ENCODE measurements at regions of chr2 and their contacts with region 1.

Region 1: GRCh38 chr2:59449269-59449668 is 1104.2 kb downstream of the BCL11A start:
- DNase-seq: no peak
- H3K4me3 ChIP-seq: no peak overlapping the region
- H3K27ac ChIP-seq: no peak overlapping the region
- H3K4me1 ChIP-seq: no peaks in the 10 kb centered on the region
- H3K27me3 ChIP-seq: no peaks in the 10 kb centered on the region
- CTCF ChIP-seq: no peak

Region 2: GRCh38 chr2:59333007-59333406 is 116.3 kb before region 1 on chr2:
- intact Hi-C with region 1: no loop called
- DNase-seq: no peak
- H3K4me3 ChIP-seq: no peak overlapping the region
- H3K27ac ChIP-seq: no peak overlapping the region
- H3K4me1 ChIP-seq: no peaks in the 10 kb centered on the region
- H3K27me3 ChIP-seq: no peaks in the 10 kb centered on the region
- CTCF ChIP-seq: no peak

Region 3: GRCh38 chr2:59575191-59575590 is 125.9 kb after region 1 on chr2:
- intact Hi-C with region 1: no loop called
- DNase-seq: no peak
- H3K4me3 ChIP-seq: no peak overlapping the region
- H3K27ac ChIP-seq: no peak overlapping the region
- H3K4me1 ChIP-seq: no peaks in the 10 kb centered on the region
- H3K27me3 ChIP-seq: no peaks in the 10 kb centered on the region
- CTCF ChIP-seq: no peak

Region 4: GRCh38 chr2:59622599-59623308 is 173.5 kb after region 1 on chr2:
- intact Hi-C with region 1: no loop called
- DNase-seq: no peak
- H3K4me3 ChIP-seq: no peak overlapping the region
- H3K27ac ChIP-seq: no peak overlapping the region
- H3K4me1 ChIP-seq: no peaks in the 10 kb centered on the region
- H3K27me3 ChIP-seq: no peaks in the 10 kb centered on the region
- CTCF ChIP-seq: no peak

Region 5: DNA sequence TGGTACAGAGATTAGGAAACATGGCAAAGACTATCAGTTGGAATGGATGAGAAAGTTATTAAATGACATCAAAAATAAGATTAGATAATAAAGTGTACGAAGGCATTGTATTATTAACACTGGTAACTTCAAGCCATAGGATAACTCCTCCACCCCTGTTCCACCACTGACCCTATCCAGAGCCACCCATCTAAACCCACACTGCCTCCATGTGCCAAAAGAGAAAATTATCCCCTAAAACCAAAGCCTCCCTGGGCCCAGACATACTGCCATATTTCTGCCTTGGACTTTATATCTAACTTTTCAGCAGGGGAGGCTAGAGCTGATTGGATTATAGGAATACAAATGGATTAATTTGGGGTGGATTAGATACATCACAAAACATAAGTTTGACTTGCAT is 660.5 kb after region 1 on chr2:
- intact Hi-C with region 1: loop called (anchors 5 kb)
- DNase-seq: no peak
- H3K4me3 ChIP-seq: no peak overlapping the region
- H3K27ac ChIP-seq: no peak overlapping the region
- H3K4me1 ChIP-seq: no peaks in the 10 kb centered on the region
- H3K27me3 ChIP-seq: no peaks in the 10 kb centered on the region
- CTCF ChIP-seq: no peak